Activated T-helper 2 cell treated with anti-CD3 and anti-CD28 coated beads, Interferon-gamma antibody, Interleukin-2, Interleukin-4, amounts not matched to agents 10 μg/mL and 5 μg/mL and 100 μg/mL, durations not matched to agents 14 hours and 24 hours and 36 hours (primary cell): ENCODE measurements at regions of chr2 and their contacts with region 1.

Region 1: GRCh38 chr2:7437716-7438632 is 520.8 kb downstream of the RNF144A start:
- DNase-seq: no peak
- H3K4me3 Mint-ChIP-seq: peak overlapping the region; percentile 39
- H3K27ac Mint-ChIP-seq: peak overlapping the region; percentile 95
- H3K4me1 Mint-ChIP-seq: peaks cover 79% of the 10 kb centered on the region
- H3K27me3 Mint-ChIP-seq: no peaks in the 10 kb centered on the region

Region 2: DNA sequence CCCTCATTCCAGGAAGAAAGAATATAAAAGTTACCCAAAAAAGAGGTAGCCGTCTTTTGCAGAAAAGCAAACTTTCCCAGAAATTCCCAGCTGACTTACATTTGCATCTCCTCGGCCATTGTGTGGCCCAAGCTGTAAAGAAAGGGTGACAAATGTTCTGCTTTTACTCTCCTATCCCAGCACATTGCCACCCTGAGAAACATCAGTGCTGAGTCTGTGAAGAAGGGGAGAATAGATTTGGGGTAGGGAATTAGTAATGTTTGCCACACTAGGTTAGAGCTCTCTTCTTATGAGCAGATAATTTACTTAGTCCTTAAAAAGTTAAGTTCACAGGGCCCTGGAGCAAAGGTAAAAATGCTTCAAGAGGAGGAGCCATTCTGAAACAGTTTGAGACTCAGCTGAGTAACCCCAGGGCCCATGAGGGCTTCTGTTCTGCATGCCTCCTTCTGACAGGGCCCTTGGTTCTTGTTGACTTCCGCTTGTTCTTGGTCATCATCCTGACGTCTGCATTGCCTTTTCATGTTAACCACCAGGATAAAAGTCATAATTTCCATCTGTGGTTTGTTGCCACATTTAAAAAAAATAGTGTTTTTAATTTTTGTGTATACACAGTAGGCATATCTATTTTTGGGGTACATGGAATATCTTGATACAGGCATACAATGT is 29.9 kb after region 1 on chr2:
- intact Hi-C with region 1: loop called (anchors 1 kb)
- DNase-seq: peak; percentile 57
- H3K4me3 Mint-ChIP-seq: peak overlapping the region; percentile 15
- H3K27ac Mint-ChIP-seq: peak overlapping the region; percentile 96
- H3K4me1 Mint-ChIP-seq: peaks cover 58% of the 10 kb centered on the region
- H3K27me3 Mint-ChIP-seq: no peaks in the 10 kb centered on the region

Region 3: DNA sequence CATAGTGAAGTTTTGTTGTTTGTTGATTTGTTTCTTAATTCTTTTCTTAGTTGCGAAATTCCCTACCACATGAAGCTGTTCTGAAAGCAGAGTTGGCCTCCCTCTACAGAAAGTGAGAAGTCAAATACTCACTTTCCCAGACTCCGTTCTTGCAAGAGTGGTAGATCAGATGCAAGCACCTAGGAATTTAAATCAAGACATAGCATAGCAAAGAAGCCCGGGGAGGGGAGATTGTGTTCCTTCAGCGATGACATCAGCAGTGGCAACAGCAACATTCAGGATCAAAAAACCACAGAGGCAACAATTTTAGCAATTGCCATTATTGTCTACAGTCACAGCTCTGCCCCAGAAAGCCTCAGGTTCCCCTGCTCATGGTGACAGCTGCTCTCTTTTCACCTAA is 59.2 kb after region 1 on chr2:
- intact Hi-C with region 1: no loop called
- DNase-seq: no peak
- H3K4me3 Mint-ChIP-seq: no peak overlapping the region
- H3K27ac Mint-ChIP-seq: no peak overlapping the region
- H3K4me1 Mint-ChIP-seq: peaks cover 31% of the 10 kb centered on the region
- H3K27me3 Mint-ChIP-seq: no peaks in the 10 kb centered on the region

Region 4: GRCh38 chr2:7567646-7568045 is 129.7 kb after region 1 on chr2:
- intact Hi-C with region 1: loop called (anchors 1 kb)
- DNase-seq: peak; percentile 53
- H3K4me3 Mint-ChIP-seq: peak overlapping the region; percentile 37
- H3K27ac Mint-ChIP-seq: peak overlapping the region; percentile 82
- H3K4me1 Mint-ChIP-seq: peaks cover 63% of the 10 kb centered on the region
- H3K27me3 Mint-ChIP-seq: no peaks in the 10 kb centered on the region

Region 5: DNA sequence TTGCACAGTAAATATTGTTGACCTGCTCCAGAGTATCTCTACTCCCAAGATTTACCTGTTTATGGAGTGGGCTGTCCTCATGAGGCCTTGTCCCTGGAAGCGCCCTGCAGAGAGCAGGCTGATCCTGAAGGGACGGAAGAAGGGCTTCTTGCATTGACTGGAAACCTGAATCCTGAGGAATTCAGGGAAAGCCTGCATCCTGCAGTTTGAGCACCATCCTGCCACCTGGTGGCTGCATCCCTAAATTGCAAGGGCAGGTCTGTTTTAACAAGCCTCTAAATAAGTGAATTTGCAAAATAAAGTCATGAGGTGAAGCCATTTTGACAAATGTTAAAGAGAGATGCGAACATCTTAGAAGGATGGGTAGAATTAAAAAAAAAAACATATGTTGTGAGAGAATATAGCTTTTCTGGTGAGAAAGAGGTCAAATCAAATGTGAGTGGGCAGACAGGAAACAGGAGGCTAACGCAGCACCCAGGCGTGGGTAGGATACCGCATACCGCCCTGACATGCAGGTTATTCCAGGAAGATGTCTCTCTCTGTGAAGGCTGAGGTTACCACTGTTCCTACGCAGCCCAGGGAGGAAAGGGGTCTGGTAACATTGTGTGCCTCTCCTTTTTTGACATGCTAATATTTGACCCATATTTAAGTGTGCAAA is 234.2 kb after region 1 on chr2:
- intact Hi-C with region 1: loop called (anchors 2 kb)
- DNase-seq: peak; percentile 51
- H3K4me3 Mint-ChIP-seq: peak overlapping the region; percentile 63
- H3K27ac Mint-ChIP-seq: peak overlapping the region; percentile 97
- H3K4me1 Mint-ChIP-seq: peaks cover 60% of the 10 kb centered on the region
- H3K27me3 Mint-ChIP-seq: no peaks in the 10 kb centered on the region

Region 6: GRCh38 chr2:7984693-7985353 is 546.8 kb after region 1 on chr2:
- intact Hi-C with region 1: loop called (anchors 5 kb)
- DNase-seq: no peak
- H3K4me3 Mint-ChIP-seq: no peak overlapping the region
- H3K27ac Mint-ChIP-seq: peak overlapping the region; percentile 89
- H3K4me1 Mint-ChIP-seq: peaks cover 32% of the 10 kb centered on the region
- H3K27me3 Mint-ChIP-seq: no peaks in the 10 kb centered on the region